ENCODE measurements at regions of chr22 and their contacts with region 1.

Region 1: DNA sequence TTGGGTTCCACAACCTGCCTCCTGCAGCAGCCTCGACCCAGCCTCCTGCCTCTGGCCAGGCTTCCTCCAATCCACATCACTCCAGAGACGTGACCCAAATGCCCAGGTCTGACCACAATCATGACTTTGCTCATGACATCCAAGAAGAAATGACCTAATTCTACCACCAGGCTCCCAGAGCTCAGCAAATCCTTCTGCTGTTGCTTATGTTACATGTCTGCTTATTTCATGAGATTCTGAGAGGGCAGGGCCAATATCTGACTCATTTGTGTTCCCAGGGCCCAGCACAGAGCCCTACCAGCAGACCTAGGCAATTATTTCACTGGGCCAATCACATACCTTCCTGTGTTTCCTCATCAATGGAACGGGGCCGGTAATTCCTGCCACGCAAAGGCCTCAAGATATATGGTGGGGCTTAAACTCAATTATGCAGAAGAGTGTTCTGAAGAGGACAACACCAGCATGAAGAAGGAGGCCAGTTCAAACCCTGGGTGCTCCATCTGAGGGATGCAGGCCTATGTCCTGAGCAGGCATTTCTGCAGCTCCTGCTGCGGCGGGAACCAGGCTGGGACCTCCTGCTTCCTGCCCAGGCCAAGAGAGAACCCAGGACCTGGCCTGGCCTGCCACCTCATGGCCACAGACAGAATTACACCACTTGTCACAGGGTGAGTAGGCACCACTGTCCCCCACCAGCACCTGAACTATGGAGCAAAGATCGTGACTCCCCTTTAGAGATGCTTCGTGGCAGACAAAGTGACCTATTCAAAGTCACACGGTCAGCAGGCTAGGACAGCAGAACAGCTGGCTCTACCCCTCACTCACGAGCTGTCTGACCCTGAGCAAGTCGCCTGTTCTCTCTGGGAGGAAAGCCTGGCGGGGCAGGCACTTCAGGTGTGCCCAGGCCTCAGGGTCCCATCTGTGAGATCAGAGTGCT is 5.9 kb downstream of the CENPM start:
- DNase-seq: peak; percentile 67
- ATAC-seq: peak; percentile 76
- H3K4me3 ChIP-seq: no peak overlapping the region
- H3K27ac ChIP-seq: peak overlapping the region; percentile 31; the same call in 1 of the 2 replicates
- H3K4me1 ChIP-seq: peaks cover 11% of the 10 kb centered on the region
- H3K27me3 ChIP-seq: no peaks in the 10 kb centered on the region
- CTCF ChIP-seq: peak; percentile 75

Region 2: DNA sequence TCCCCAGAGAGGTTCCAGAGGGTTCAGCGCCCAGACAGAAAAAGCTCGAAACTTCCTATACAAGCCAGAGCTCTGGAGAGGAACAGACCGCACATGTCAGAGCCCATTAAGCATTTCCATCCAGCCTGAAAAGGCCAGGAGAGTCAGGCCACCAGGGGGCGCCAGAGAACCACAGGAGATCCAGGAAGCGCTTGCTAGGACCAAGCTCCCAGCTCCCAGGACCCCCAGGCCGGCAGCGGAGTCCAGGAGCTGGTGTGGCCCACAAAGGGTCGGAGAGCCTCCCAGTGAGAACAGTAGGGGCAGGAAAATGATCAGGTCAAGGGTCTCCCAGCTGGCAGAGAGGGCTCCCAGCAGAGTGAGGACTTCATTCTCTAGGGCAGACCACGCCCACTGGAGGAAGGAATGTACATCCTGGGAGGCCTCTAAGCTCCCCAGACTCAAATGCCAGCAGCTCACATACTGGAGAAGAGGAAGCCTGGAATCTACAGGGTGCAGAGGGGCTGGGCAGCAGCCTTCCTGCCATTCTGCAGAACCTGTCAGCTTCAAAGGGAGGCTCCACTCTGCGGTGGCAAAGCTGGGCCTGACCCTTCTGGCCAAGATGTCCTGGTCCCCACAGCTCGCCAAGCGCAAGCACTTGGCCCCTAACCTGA is 243.8 kb before region 1 on chr22:
- CTCF ChIA-PET with region 1: interaction called, 6 read pairs
- POLR2A ChIA-PET with region 1: no interaction called
- intact Hi-C with region 1: loop called (anchors 2 kb)
- DNase-seq: peak; percentile 83
- ATAC-seq: peak; percentile 93
- H3K4me3 ChIP-seq: no peak overlapping the region
- H3K27ac ChIP-seq: no peak overlapping the region
- H3K4me1 ChIP-seq: 0 out of 2 replicates have a peak, but pooled peaks cover 3% of the 10 kb centered on the region
- H3K27me3 ChIP-seq: no peaks in the 10 kb centered on the region
- CTCF ChIP-seq: peak; percentile 93